AG04450 (cell line): ENCODE measurements at regions of chr12 and their contacts with region 1.

Region 1: DNA sequence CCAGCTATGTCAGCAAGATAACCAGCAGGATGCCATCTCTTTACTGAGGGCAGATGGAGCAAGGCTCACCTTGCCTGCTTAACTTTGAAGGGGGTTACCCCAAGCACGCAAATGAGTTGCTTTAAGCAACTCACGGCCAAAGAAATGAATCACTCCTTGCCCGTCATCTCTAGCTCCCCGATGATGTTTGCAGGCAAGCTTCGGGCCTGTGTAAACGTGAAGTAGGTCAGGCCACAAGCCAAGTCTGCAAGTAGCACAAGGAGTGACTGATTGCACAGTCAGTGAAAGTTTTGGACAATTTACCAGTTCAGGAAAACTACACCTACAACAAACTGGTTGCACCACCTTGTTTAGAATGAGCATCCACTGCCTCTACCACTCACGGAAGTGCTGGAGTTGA is 699.7 kb upstream of the TBX3 start:
- DNase-seq: peak; percentile 62
- H3K4me3 ChIP-seq: no peak overlapping the region
- H3K27ac ChIP-seq: no peak overlapping the region
- H3K27me3 ChIP-seq: no peaks in the 10 kb centered on the region
- CTCF ChIP-seq: no peak

Region 2: GRCh38 chr12:115898670-115899069 is 515.0 kb after region 1 on chr12:
- CTCF ChIA-PET with region 1: interaction called, 14 read pairs
- POLR2A ChIA-PET with region 1: no interaction called
- DNase-seq: no peak
- H3K4me3 ChIP-seq: no peak overlapping the region
- H3K27ac ChIP-seq: no peak overlapping the region
- H3K27me3 ChIP-seq: peaks cover 8% of the 10 kb centered on the region
- CTCF ChIP-seq: no peak